Transverse colon (tissue), 4 donors: ENCODE measurements at regions of chr19 and their contacts with region 1.

Region 1: GRCh38 chr19:15672580-15673175 is at the start of gene CYP4F12:
- DNase-seq: peak; percentile 96
- H3K4me3 ChIP-seq: peak within 1 kb of the TSS in 3 of 4 donors; percentile 18 to 47 (median 22)
- H3K27ac ChIP-seq: peak within 1 kb of the TSS; percentile 85 to 88 (median 87)
- H3K4me1 ChIP-seq: peaks cover 7 to 23% (median 18%) of the 10 kb centered on the region in 4 donors
- H3K27me3 ChIP-seq: no peaks in the 10 kb centered on the region
- CTCF ChIP-seq: no peak
- EP300 ChIP-seq: peak; percentile 19
- POLR2A ChIP-seq: peak; percentile 85
- total RNA-seq, gene CYP4F12: 229 to 406 (median 273) TPM

Region 2: GRCh38 chr19:15555759-15556633 is 116.7 kb before region 1 on chr19:
- in situ Hi-C with region 1: no loop called
- intact Hi-C with region 1: no loop called
- DNase-seq: peak; percentile 91
- H3K4me3 ChIP-seq: peak overlapping the region in 2 of 4 donors; percentile 29 to 34
- H3K27ac ChIP-seq: peak overlapping the region in 3 of 4 donors; percentile 7 to 63 (median 10)
- H3K4me1 ChIP-seq: peaks cover 3 to 16% (median 13%) of the 10 kb centered on the region in 4 donors
- H3K27me3 ChIP-seq: peaks cover 29% of the 10 kb centered on the region
- CTCF ChIP-seq: peak; percentile 71 to 83 (median 76)
- EP300 ChIP-seq: no peak
- POLR2A ChIP-seq: no peak

Region 3: GRCh38 chr19:15629003-15629880 is 43.4 kb before region 1 on chr19:
- in situ Hi-C with region 1: no loop called
- intact Hi-C with region 1: no loop called
- DNase-seq: peak; percentile 92
- H3K4me3 ChIP-seq: peak overlapping the region in 1 of 4 donors; percentile 6
- H3K27ac ChIP-seq: no peak overlapping the region
- H3K4me1 ChIP-seq: peaks cover 0 to 4% (median 0%) of the 10 kb centered on the region in 4 donors
- H3K27me3 ChIP-seq: peaks cover 4% of the 10 kb centered on the region
- CTCF ChIP-seq: peak; percentile 97 to 99 (median 99)
- EP300 ChIP-seq: no peak
- POLR2A ChIP-seq: no peak

Region 4: DNA sequence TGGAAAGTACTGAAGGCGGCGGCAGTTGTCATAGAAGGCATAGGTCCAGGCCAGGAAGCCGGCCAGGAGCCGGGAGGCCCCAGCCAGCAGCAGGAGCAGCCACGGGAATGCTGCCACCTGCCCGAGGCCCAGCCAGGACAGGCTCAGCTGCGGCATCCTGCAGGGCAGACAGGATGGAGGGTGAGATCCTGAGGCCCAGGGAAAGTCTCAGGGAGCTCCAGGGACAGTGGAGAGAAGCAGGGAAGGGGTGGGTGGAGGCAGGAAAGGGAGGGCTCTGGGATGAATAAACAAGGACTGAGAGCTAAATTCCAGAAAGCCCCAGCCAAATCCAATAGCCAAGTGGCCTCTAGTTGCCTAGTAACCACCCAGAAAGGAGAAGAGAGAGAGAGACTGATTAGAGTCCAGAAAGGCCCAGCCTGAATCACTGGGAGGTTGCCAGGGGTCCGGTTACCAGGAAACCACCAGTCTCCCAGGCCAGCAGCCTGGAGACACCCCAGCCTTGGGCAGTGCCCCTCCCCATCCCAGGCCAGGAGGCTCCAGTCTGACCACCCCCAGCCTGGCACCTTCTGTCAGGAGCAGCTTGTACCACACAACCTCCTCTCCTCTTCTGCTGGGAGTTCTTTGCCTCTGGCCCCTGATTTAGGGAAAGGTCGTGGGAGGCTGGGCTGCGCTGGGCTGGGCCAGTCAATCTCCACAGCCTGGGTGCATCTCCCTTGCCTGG is 107.2 kb after region 1 on chr19:
- in situ Hi-C with region 1: loop called (anchors 5 kb)
- intact Hi-C with region 1: no loop called
- DNase-seq: peak; percentile 61
- H3K4me3 ChIP-seq: no peak overlapping the region
- H3K27ac ChIP-seq: peak overlapping the region; percentile 39 to 87 (median 70)
- H3K4me1 ChIP-seq: peaks cover 7 to 12% (median 11%) of the 10 kb centered on the region in 4 donors
- H3K27me3 ChIP-seq: no peaks in the 10 kb centered on the region
- CTCF ChIP-seq: no peak
- EP300 ChIP-seq: no peak
- POLR2A ChIP-seq: no peak

Region 5: DNA sequence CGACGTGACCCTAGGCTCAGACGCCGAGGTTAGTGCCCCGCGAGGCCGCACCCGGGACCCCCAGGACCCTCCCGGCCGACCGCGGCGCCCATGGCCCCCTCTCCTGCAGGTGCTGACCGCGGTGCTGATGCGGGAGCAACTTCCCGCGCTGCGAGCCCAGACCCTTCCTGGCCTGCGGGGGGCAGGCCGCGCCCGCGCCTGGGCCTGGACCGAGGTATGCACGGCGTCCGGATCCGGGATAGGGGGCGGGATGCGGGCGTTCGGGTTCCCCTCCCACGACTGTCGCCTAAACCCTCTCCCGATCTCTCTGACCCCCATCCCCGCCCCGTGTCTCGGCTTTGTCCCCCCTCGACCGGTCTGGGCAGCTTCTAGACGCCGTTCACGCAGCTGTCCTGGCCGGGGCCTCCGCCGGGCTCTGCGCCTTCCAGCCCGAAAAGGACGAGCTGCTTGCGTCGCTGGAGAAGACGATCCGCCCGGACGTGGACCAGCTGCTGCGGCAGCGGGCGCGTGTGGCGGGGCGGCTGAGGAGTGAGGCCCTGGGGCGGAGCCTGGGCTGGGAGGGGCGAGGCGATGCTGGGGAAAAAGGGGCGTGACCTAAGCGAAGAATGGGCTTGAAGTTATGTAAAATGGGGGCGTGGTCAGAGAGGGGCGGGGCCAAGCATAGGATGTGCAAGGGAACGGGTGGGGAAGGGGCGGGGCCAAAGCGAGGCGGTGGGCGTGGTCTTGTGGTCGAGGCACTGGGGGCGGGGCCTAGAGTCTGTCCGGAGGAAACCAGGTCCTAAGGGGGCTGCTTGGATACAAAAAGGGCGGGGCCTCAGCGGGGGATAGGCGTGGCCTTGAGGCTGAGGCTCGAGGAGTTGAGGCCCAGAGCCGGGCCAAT is 1866.8 kb after region 1 on chr19:
- in situ Hi-C with region 1: no loop called
- intact Hi-C with region 1: no loop called
- DNase-seq: peak; percentile 90
- H3K4me3 ChIP-seq: peak overlapping the region; percentile 6 to 48 (median 28)
- H3K27ac ChIP-seq: peak overlapping the region; percentile 52 to 60 (median 56)
- H3K4me1 ChIP-seq: peaks cover 6 to 12% (median 11%) of the 10 kb centered on the region in 4 donors
- H3K27me3 ChIP-seq: no peaks in the 10 kb centered on the region
- CTCF ChIP-seq: peak in 3 of 5 experiments; percentile 19 to 37 (median 21)
- EP300 ChIP-seq: no peak
- POLR2A ChIP-seq: peak; percentile 23